PC-9 (cell line): ENCODE measurements at regions of chr17 and their contacts with region 1.

Region 1: DNA sequence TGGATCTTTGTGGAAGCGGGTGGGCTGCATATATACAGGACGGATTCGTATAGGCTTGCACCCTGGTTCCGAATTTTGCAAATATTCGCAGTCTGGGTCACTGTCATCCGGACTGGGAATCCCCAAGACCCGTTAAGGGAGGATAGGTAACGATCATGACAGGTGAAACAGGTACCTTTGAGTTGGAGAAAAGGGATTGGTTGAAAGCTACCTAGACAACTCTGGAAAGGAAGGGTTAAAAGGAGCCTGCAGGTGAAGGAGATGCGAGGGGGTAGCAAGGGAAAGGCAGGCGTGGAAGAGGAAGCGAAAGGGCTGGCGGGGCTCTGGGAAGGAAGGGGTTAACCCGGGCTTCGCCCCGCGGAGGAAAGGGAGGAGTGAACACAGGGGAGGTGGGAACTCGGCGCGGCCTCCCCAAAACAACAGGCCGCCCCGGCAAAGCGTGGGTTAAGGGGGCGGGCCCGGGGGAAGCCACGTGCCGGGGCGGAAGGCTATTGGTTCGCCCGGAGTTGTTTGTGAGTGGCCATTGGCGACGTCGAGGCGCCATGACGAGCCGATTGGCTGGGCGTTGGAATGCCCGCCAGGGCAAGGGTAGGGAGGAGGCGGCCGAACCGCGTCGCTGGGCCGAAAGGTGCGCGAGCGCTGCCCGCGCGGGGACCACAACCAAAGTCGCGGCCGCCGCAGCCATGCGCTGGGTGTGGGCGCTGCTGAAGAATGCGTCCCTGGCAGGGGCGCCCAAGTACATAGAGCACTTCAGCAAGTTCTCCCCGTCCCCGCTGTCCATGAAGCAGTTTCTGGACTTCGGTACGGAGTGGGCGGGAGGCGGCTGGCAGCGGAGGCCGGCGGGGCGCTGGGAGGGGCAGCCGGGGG is at the start of gene PDK2:
- DNase-seq: peak; percentile 92 to 97
- H3K4me3 ChIP-seq: peak within 1 kb of the TSS; percentile 88
- H3K27ac ChIP-seq: peak within 1 kb of the TSS; percentile 12; the same call in 1 of the 2 replicates
- H3K4me1 ChIP-seq: peaks cover 18% of the 10 kb centered on the region
- H3K27me3 ChIP-seq: no peaks in the 10 kb centered on the region
- CTCF ChIP-seq: no peak
- total RNA-seq, gene PDK2: 38.6 and 58.7 TPM in 2 replicates

Region 2: GRCh38 chr17:49980703-49981197 is 114.2 kb before region 1 on chr17:
- CTCF ChIA-PET with region 1: no interaction called
- POLR2A ChIA-PET with region 1: interaction called, 10 read pairs
- intact Hi-C with region 1: no loop called
- DNase-seq: no peak
- H3K4me3 ChIP-seq: no peak overlapping the region
- H3K27ac ChIP-seq: no peak overlapping the region
- H3K4me1 ChIP-seq: peaks cover 9% of the 10 kb centered on the region; the same call in 1 of the 2 replicates
- H3K27me3 ChIP-seq: no peaks in the 10 kb centered on the region; the same call in 1 of the 2 replicates
- CTCF ChIP-seq: no peak

Region 3: DNA sequence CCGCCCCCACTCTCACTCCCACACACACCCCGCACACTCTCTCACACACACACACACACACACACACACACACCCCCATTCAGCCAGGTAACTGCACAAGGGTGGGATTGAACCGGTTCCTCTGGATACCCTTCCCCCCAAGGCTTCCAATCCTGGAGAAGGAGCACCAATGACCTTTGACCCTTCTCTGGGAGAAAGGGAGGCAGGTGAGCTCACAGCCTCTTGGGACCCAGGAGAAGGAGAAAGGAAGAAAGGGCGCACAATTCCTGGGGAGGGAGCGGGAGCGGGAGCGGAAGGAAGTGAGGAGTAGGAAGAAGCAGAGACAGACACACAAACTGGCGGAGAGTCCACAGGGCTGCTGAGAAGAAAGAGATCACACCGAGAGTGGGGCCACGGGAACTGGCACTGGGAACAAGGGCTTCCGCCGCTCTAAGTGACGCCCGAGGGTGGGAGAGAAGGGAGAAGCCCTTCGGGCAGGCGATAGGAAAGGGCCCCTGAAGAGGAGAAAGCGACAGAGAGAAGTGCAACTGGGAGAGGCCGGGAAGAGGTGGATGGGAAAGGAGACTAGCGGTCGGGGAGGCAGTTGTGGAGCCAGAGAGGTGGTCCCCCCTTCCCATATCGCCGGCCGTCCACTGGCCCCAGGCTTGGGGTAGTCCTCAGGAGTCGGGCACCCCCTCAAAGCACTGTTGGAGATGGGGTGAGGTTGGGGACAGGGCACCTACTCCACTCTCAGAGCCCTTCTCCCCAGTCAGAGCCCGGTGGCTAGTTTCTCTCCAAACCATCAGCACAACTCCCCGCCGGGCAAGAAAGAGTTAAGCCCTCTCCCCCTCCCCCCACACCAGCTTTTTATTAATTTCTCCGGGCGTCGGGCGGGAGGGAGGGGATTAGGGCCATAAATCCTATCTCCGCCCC is 33.7 kb after region 1 on chr17:
- CTCF ChIA-PET with region 1: no interaction called
- POLR2A ChIA-PET with region 1: no interaction called
- intact Hi-C with region 1: no loop called
- DNase-seq: no peak
- H3K4me3 ChIP-seq: no peak overlapping the region
- H3K27ac ChIP-seq: no peak overlapping the region
- H3K4me1 ChIP-seq: peaks cover 9% of the 10 kb centered on the region; the same call in 1 of the 2 replicates
- H3K27me3 ChIP-seq: peaks cover 28% of the 10 kb centered on the region
- CTCF ChIP-seq: no peak

Region 4: DNA sequence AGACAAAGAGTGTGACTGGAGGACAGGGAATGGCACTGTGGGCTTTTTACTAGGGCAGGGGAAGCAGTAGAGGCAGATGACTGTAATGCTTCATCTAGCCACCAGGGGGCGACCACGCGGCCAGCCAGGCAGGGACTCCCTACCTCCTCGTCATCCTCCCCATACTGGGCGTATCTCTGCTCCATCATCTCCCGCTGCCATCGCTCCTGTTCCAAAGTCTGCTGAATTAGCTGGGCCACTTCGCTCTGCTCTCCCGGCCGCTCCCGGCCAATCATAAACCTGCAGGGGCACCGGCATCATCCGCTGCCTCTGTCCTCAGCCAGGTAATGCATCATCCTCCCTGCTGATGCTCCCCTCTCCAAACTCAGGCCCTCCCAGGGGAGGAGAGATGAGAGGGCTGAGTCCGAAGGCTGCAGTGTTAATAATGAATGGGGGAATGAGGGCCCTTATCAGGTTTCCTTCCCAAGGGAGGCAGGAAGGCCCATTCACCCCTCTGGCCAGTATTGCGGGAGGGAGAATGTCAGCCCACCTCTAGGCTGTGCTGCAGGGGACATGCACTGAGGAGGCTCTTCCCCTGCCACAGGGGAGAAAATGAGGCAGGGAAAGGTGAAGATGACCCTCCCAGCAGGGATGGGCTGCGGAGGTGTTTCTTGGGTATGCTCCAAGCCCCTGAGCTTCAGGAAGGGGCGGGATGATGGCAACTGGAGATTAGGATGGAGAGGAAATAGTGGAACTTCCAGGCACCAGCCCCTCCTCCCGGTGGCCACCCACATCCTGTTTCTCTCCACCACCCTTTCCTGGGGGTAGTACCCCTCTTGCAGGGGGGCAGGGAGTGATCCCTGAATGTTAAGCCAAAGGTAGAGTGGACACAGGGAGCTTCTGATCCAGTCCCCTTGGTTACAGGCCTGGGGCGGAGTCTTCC is 45.2 kb after region 1 on chr17:
- CTCF ChIA-PET with region 1: no interaction called
- POLR2A ChIA-PET with region 1: no interaction called
- intact Hi-C with region 1: loop called (anchors 2 kb)
- DNase-seq: peak in 1 of 2 experiments; percentile 62
- H3K4me3 ChIP-seq: no peak overlapping the region
- H3K27ac ChIP-seq: no peak overlapping the region
- H3K4me1 ChIP-seq: peaks cover 14% of the 10 kb centered on the region
- H3K27me3 ChIP-seq: no peaks in the 10 kb centered on the region
- CTCF ChIP-seq: peak; percentile 97

Region 5: DNA sequence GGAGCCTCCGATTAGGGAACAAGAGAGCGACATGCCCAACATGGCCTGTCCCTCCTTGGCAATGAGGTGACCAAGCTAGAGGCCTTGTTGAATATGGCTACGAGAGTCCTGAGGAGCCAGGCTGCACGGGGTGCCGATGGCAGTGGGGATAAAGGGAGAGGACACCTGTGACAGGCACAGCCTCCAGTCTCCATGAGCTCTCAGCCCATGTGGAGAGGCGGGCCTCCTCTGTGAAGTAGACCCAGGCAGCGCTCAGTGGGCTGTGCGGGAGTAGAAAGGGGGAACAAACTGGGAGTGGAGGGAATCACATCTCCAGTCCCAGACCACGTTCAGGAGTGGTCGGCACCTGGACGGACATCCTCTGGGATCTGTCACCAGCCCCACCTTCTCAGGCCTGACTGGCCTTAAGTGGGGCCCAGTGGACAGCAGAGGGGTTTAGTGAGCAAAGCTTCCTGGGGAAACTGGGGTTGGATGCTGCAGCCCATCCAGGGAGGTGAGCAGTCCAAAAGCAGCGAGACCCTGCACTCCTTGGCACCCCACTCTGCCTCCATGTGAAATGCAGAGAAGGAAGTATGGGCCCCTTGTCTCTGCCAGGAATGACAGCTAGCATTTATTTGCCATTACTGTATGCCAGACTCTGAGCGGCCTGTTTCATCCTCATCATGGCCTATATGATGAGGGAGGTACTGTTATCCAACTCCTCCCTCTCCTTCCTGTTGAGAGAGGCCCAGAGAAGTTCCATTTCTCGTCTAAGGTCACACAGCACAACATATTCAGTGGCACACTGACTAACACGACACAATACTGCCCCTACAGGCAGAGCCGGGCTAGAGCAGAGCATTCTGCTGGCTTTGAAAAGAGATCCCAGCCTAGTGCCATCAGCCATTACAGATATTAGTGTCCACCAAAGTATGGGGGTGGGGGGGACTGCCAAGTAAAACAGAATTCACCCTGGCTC is 174.8 kb after region 1 on chr17:
- CTCF ChIA-PET with region 1: interaction called, 16 read pairs
- POLR2A ChIA-PET with region 1: interaction called, 7 read pairs
- intact Hi-C with region 1: no loop called
- DNase-seq: peak; percentile 46 to 59
- H3K4me3 ChIP-seq: no peak overlapping the region
- H3K27ac ChIP-seq: no peak overlapping the region
- H3K4me1 ChIP-seq: peaks cover 22% of the 10 kb centered on the region
- H3K27me3 ChIP-seq: no peaks in the 10 kb centered on the region; the same call in 1 of the 2 replicates
- CTCF ChIP-seq: peak; percentile 92

Region 6: DNA sequence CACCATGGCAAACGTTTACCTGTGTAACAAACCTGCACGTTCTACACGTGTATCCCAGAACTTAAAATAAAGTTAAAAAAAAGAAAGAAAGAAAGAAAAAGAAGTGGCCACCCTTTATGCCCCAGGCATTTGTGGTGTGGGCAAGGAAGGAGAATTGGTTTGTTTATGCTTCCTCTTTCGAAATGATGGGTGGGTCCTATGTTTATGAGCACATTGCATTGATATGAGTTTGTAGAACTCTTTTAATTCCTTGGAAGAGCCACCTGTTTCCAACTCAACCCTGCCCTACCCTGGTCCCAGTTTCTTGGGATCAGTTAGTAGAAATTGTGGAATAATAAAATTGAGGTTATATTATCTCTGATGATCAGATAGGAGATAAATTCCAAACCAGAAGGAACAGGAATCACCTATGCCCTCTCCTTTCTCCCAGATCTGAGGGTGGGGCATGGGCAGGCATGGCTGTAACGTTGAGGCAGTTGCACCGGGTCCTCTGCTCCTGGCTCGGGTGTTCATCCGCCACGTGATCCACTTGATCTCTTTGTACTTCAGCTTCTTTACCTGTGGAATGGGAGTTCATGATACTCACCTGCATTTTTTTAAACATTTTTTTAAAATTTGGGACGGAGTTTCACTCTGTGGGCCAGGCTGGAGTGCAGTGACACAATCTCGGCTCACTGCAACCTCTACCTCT is 357.8 kb after region 1 on chr17:
- CTCF ChIA-PET with region 1: interaction called, 10 read pairs
- POLR2A ChIA-PET with region 1: no interaction called
- intact Hi-C with region 1: no loop called
- DNase-seq: peak; percentile 56 to 98
- H3K4me3 ChIP-seq: peak overlapping the region; percentile 39; the same call in 1 of the 2 replicates
- H3K27ac ChIP-seq: peak overlapping the region; percentile 64
- H3K4me1 ChIP-seq: peaks cover 72% of the 10 kb centered on the region
- H3K27me3 ChIP-seq: no peaks in the 10 kb centered on the region
- CTCF ChIP-seq: no peak